CD4-positive, alpha-beta memory T cell (primary cell): ENCODE measurements at regions of chr6 and their contacts with region 1.

Region 1: GRCh38 chr6:37051138-37052026 is 45.9 kb downstream of the FGD2 start:
- DNase-seq: peak; percentile 84 to 91 (median 84)
- H3K4me3 ChIP-seq: no peak overlapping the region
- H3K4me3 Mint-ChIP-seq: peak overlapping the region; percentile 38 to 92 (median 68)
- H3K27ac ChIP-seq: peak overlapping the region; percentile 72
- H3K27ac Mint-ChIP-seq: peak overlapping the region; percentile 31 to 94 (median 92)
- H3K4me1 ChIP-seq: peaks cover 60% of the 10 kb centered on the region
- H3K4me1 Mint-ChIP-seq: peaks cover 50 to 62% (median 55%) of the 10 kb centered on the region in 4 donors
- H3K27me3 ChIP-seq: no peaks in the 10 kb centered on the region
- H3K27me3 Mint-ChIP-seq: no peaks in the 10 kb centered on the region

Region 2: GRCh38 chr6:35342258-35343091 is 1708.9 kb before region 1 on chr6 and contains the start of gene PPARD:
- CTCF ChIA-PET with region 1: no interaction called
- POLR2A ChIA-PET with region 1: no interaction called
- intact Hi-C with region 1: no loop called
- DNase-seq: peak; percentile 94 to 98 (median 95)
- H3K4me3 ChIP-seq: peak within 1 kb of the TSS; percentile 50 to 97
- H3K4me3 Mint-ChIP-seq: peak within 1 kb of the TSS; percentile 87 to 99 (median 96)
- H3K27ac ChIP-seq: peak within 1 kb of the TSS; percentile 86
- H3K27ac Mint-ChIP-seq: peak within 1 kb of the TSS; percentile 87 to 99 (median 96)
- H3K4me1 ChIP-seq: peaks cover 52% of the 10 kb centered on the region
- H3K4me1 Mint-ChIP-seq: peaks cover 37 to 60% (median 51%) of the 10 kb centered on the region in 4 donors
- H3K27me3 ChIP-seq: no peaks in the 10 kb centered on the region
- H3K27me3 Mint-ChIP-seq: no peaks in the 10 kb centered on the region
- total RNA-seq, gene PPARD: 37.2 to 38.7 TPM

Region 3: GRCh38 chr6:36968266-36968977 is 83.0 kb before region 1 on chr6:
- CTCF ChIA-PET with region 1: no interaction called
- POLR2A ChIA-PET with region 1: no interaction called
- intact Hi-C with region 1: no loop called
- DNase-seq: no peak
- H3K4me3 ChIP-seq: no peak overlapping the region
- H3K4me3 Mint-ChIP-seq: no peak overlapping the region
- H3K27ac ChIP-seq: no peak overlapping the region
- H3K27ac Mint-ChIP-seq: peak overlapping the region in 6 of 7 donors; percentile 16 to 78 (median 34)
- H3K4me1 ChIP-seq: peaks cover 19% of the 10 kb centered on the region
- H3K4me1 Mint-ChIP-seq: peaks cover 14 to 30% (median 21%) of the 10 kb centered on the region in 4 donors
- H3K27me3 ChIP-seq: no peaks in the 10 kb centered on the region
- H3K27me3 Mint-ChIP-seq: no peaks in the 10 kb centered on the region

Region 4: DNA sequence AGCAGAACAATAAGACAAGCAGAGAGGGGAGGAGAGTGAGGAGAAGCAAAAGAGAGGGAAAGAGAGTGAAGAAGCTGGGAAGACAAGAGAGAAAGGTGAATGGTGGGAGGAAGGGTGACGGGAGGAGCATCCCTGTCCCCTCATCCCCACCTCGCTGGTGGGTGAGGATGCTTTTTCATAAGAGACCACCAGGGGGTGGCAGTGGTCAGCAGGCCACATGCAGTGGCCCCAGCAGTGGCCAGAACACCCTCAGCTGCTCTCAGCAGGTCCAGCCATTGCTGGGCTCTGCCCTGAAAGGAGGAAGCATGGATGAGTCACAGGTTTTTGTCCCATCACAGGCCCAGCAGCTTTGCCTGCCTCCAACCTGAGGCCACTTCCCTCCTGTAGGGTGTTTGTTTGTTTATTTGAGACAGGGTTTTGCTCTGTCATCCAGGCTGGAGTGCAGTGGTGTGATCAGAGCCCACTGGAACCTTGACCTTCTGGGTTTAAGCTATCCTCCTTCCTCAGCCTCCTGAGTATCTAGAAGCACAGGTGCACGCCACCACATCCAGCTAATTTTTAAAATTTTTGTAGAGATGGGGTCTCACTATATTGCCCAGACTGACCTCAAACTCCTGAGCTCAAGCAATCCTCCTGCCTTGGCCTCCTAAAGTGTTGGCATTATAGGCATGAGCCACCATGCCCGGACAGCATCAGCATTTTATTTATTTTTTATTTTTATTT is 22.0 kb before region 1 on chr6:
- CTCF ChIA-PET with region 1: interaction called, 234 read pairs
- POLR2A ChIA-PET with region 1: interaction called, 57 read pairs
- intact Hi-C with region 1: no loop called
- DNase-seq: peak in 3 of 5 donors; percentile 19 to 39 (median 38)
- H3K4me3 ChIP-seq: no peak overlapping the region
- H3K4me3 Mint-ChIP-seq: peak overlapping the region in 1 of 8 donors; percentile 35
- H3K27ac ChIP-seq: no peak overlapping the region
- H3K27ac Mint-ChIP-seq: peak overlapping the region in 6 of 7 donors; percentile 10 to 82 (median 25)
- H3K4me1 ChIP-seq: peaks cover 17% of the 10 kb centered on the region
- H3K4me1 Mint-ChIP-seq: peaks cover 14 to 40% (median 30%) of the 10 kb centered on the region in 4 donors
- H3K27me3 ChIP-seq: no peaks in the 10 kb centered on the region
- H3K27me3 Mint-ChIP-seq: no peaks in the 10 kb centered on the region

Region 5: DNA sequence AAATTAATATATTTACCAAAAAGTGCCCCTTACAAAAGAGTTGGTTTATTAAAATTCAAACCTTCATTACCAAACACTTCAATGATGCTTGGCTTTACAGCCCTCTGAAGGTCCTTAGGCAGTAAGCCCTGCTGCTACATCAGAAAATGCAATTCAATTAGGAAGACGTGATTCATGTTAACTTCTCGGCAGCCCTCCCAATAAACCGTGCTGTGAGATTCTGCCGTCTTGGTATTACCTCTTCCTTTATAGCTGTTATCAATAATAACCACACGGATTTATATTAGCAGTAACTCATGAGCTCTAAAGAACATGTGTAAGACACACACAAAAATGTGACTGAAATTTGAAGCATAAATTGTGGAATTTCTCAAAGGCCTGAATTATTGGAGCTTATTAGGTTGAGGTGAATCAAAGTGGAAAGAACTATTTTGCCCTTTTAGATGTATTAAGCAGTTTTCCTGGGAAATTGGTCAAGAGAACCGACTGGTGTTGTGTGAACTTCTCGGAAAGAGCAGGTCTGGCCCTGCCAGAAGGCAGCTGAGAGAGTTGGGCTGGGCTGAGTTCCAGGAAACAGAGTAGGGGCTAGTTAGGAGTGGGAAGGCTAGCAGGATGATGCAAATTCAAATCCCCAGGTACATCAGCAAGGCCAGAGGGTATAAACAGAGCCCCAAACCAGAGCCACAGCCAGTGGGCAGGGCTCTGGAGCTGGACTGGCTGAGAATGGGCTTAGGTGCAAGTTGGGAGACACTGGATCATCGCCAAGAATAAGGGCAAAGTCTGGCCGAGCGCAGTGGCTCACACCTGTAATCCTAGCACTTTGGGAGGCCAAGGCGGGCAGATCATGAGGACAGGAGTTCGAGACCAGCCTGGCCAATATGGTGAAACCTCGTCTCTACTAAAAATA is 12.8 kb before region 1 on chr6:
- CTCF ChIA-PET with region 1: interaction called, 12 read pairs
- POLR2A ChIA-PET with region 1: interaction called, 5 read pairs
- intact Hi-C with region 1: no loop called
- DNase-seq: no peak
- H3K4me3 ChIP-seq: no peak overlapping the region
- H3K4me3 Mint-ChIP-seq: no peak overlapping the region
- H3K27ac ChIP-seq: no peak overlapping the region
- H3K27ac Mint-ChIP-seq: peak overlapping the region in 1 of 7 donors; percentile 60
- H3K4me1 ChIP-seq: peaks cover 7% of the 10 kb centered on the region
- H3K4me1 Mint-ChIP-seq: peaks cover 11 to 14% (median 13%) of the 10 kb centered on the region in 4 donors
- H3K27me3 ChIP-seq: no peaks in the 10 kb centered on the region
- H3K27me3 Mint-ChIP-seq: no peaks in the 10 kb centered on the region

Region 6: GRCh38 chr6:37102279-37103168 is 51.1 kb after region 1 on chr6:
- CTCF ChIA-PET with region 1: interaction called, 19 read pairs
- POLR2A ChIA-PET with region 1: interaction called, 20 read pairs
- intact Hi-C with region 1: no loop called
- DNase-seq: peak; percentile 79 to 86 (median 84)
- H3K4me3 ChIP-seq: peak overlapping the region; percentile 19 to 27
- H3K4me3 Mint-ChIP-seq: peak overlapping the region; percentile 68 to 85 (median 80)
- H3K27ac ChIP-seq: peak overlapping the region; percentile 65
- H3K27ac Mint-ChIP-seq: peak overlapping the region; percentile 80 to 96 (median 94)
- H3K4me1 ChIP-seq: peaks cover 22% of the 10 kb centered on the region
- H3K4me1 Mint-ChIP-seq: peaks cover 15 to 36% (median 27%) of the 10 kb centered on the region in 4 donors
- H3K27me3 ChIP-seq: no peaks in the 10 kb centered on the region
- H3K27me3 Mint-ChIP-seq: no peaks in the 10 kb centered on the region

Region 7: GRCh38 chr6:37121556-37121955 is 70.2 kb after region 1 on chr6:
- CTCF ChIA-PET with region 1: no interaction called
- POLR2A ChIA-PET with region 1: no interaction called
- intact Hi-C with region 1: no loop called
- DNase-seq: no peak
- H3K4me3 ChIP-seq: no peak overlapping the region
- H3K4me3 Mint-ChIP-seq: no peak overlapping the region
- H3K27ac ChIP-seq: no peak overlapping the region
- H3K27ac Mint-ChIP-seq: no peak overlapping the region
- H3K4me1 ChIP-seq: no peaks in the 10 kb centered on the region
- H3K4me1 Mint-ChIP-seq: peaks cover 4% of the 10 kb centered on the region in 4 donors
- H3K27me3 ChIP-seq: no peaks in the 10 kb centered on the region
- H3K27me3 Mint-ChIP-seq: no peaks in the 10 kb centered on the region

Region 8: GRCh38 chr6:37182736-37183590 is 131.6 kb after region 1 on chr6:
- CTCF ChIA-PET with region 1: interaction called, 18 read pairs
- POLR2A ChIA-PET with region 1: interaction called, 386 read pairs
- intact Hi-C with region 1: no loop called
- DNase-seq: peak; percentile 70 to 79 (median 74)
- H3K4me3 ChIP-seq: peak overlapping the region; percentile 14 to 21
- H3K4me3 Mint-ChIP-seq: peak overlapping the region in 7 of 8 donors; percentile 55 to 77 (median 71)
- H3K27ac ChIP-seq: peak overlapping the region; percentile 52
- H3K27ac Mint-ChIP-seq: peak overlapping the region; percentile 79 to 94 (median 89)
- H3K4me1 ChIP-seq: peaks cover 86% of the 10 kb centered on the region
- H3K4me1 Mint-ChIP-seq: peaks cover 33 to 70% (median 47%) of the 10 kb centered on the region in 4 donors
- H3K27me3 ChIP-seq: no peaks in the 10 kb centered on the region
- H3K27me3 Mint-ChIP-seq: no peaks in the 10 kb centered on the region

Region 9: DNA sequence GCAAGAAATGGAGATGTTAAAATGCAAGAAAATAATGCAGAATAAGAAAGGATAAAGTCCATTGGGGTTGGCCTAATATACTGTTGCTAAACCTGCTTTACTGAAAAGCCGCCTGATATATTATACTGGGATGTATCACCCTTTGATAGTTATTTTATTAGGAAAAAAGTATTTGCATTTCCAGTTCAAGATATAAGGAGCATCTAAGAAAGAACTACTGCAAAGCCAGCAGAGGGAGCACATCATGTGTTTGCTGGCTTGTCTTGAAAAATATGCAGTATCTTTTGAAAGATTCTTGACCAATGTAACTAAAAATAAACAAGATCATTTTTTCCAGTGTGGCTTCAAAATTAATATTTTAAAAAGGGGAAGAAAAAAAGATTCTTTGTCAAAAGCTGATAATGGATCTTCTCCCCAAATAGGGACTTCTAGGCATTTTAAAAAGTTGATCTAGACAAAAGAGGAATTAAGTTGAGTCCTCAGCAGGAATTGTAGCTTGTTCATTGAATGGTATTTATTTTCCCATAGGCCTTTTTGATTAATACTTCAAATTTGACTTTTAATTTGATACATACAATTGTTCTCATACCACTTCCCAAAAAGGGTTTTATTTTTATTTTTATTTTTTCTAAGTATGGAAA is 983.0 kb after region 1 on chr6:
- CTCF ChIA-PET with region 1: no interaction called
- POLR2A ChIA-PET with region 1: no interaction called
- intact Hi-C with region 1: no loop called
- DNase-seq: peak in 1 of 5 donors; percentile 2
- H3K4me3 ChIP-seq: no peak overlapping the region
- H3K4me3 Mint-ChIP-seq: peak overlapping the region in 3 of 8 donors; percentile 3 to 26 (median 11)
- H3K27ac ChIP-seq: no peak overlapping the region
- H3K27ac Mint-ChIP-seq: peak overlapping the region in 2 of 7 donors; percentile 13 to 20
- H3K4me1 ChIP-seq: peaks cover 23% of the 10 kb centered on the region
- H3K4me1 Mint-ChIP-seq: peaks cover 42 to 78% (median 58%) of the 10 kb centered on the region in 4 donors
- H3K27me3 ChIP-seq: no peaks in the 10 kb centered on the region
- H3K27me3 Mint-ChIP-seq: no peaks in the 10 kb centered on the region